Left cardiac atrium (tissue), 4 donors: ENCODE measurements at regions of chr7 and their contacts with region 1.

Region 1: DNA sequence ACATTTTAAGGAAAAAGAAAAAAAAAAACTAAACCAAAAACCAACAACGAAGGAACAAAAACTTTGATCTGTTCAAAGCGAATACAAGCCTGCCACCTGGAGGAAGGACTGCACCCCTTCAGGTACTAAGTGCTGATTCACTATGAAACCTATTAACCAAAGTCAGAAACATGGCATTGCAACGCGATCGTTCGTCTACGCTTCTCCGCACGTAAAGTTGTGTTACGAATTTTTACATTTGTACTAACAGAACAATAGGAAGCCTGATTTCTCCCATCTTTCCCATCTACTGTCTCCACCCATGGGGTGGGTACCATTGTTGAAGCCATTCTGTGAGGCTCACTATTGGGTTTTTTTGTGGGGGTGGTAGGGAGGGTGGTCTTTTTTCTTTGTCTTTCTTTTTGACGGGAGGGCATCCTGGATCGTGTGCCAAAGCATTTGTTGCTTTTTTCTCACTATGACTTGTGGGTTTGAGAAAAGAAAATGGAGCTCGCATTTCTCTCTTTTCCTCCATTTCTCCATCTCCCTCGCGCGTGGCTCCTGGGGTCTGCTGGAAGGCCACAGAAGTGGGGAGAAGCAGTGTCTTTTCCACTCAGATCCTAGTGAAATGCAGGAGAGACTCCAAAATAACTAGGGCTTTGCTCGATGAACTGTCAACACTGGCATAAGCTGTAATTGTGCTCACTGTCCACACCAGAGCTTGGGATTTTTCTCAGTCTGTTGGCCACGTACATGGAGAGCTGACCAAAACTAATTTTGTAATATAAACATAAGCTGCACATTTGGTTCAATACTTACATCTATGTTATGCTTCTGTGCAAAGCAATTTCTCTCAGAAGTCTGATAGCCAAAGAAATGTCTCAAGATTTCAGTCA is 100.9 kb upstream of the YAE1 start:
- DNase-seq: peak; percentile 34
- ATAC-seq: peak; percentile 75 to 77

Region 2: DNA sequence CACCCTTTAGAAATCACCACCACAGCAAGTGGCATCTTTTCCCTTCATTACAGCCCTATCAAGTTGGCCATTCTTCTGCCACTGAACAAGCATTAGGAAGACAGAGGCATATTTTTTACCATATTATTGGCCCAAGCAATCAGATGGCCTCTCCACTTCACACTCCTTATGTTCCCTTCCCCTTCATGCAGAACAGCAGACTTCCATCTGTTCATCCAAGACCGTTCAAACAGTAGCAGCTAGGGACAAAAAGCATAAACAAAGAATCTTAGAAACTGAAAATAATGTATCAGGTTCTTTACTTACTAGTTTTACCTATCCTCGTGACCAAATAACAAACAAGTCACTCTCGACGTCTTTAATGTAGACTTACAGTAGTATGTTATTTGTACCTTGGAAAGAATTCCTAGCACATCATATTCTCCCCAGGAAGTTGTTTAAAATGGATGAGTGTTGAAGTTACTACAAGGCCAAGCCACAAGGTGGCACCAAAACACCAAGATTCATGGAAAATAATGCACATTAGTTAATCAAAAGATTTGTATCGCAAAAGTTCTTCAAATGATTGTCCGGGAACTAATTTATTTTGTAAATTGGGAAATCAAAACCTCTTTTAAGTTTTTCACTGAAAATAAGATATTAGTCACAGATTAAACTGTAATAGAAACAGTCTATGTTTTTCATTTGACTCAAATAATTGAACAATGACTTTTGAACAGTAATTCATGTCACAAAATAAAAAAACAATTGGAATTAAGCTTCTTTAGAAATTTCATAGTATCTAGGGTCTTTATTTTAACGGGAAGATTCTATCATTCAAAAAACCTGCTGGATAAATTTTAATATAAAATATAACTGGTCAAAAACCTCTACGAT is 668.4 kb before region 1 on chr7:
- intact Hi-C with region 1: loop called (anchors 5 to 10 kb)
- DNase-seq: peak; percentile 32
- ATAC-seq: no peak

Region 3: DNA sequence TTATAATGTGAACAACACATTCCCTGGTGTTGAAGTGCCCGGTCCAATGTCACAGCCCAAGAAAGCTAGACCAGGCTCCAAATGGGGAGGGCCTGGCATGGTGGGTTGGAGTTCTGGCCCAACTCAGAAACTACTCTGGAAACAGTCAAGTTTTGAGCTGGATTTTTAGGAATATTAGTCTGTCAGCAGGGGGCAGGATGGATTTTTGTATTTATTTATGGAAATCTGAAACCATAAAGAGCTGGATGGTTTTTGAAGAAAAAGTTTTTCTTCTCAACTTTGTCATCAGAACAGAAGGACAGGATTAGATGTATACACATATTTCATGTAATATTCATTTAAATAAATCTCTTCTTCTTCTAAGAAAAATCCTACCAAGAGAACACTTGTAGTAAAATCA is 390.1 kb before region 1 on chr7:
- intact Hi-C with region 1: loop called in 1 of 2 experiments (anchors 5 kb)
- DNase-seq: no peak
- ATAC-seq: no peak